ENCODE measurements at regions of chr6 and their contacts with region 1.

Region 1: GRCh38 chr6:141056945-141057625 is 1075.6 kb upstream of the GJE1 start:
- DNase-seq: no peak

Region 2: DNA sequence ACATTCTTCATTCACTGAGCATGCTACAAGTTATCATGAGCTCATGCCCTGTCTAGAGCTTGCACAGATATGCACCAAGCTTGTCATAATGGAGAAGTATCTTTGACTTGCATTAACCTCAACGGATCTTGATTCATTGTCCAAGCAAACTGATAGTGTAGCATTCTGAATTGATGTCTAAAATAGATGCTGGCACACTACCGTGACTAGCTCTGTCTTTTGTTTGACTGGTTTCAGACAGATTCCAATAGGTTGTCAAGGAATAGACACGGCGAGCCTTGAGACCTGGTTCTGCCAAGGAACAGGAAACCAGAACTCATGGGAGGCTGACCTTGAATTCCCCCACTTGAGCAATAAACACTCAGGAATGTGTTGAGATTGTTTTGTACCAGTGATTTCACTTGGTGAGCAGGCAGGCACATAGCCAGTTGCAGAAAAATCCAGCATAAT is 77.4 kb before region 1 on chr6:
- intact Hi-C with region 1: loop called in 1 of 2 experiments (anchors 2 kb)
- DNase-seq: no peak

Region 3: GRCh38 chr6:142246960-142247359 is 1189.9 kb after region 1 on chr6:
- intact Hi-C with region 1: no loop called
- DNase-seq: no peak

Measured in posterior vena cava (tissue), 2 donors.